ENCODE measurements at regions of chr2 and their contacts with region 1.

Region 1: DNA sequence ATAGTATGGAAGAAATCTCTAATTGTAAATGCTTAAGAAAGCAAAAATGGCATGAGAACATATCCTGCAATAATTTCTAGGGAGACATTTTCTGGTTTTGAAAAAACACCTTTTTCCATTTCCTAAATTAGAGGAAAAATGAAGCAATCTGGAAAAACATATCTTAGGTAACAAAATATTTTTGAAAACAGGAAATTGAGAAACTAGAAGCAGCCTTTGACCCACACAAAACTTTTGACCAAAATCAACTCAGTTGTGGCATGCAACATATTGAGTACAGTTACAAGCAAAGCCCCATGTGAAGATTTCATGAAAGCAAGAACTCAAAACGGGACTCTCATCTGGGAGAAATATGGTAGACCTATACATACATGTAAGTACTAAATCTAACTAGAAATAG is 28.6 kb upstream of the CHAC2 start:
- DNase-seq: no peak
- ATAC-seq: no peak
- H3K4me3 ChIP-seq: no peak overlapping the region
- H3K27ac ChIP-seq: no peak overlapping the region
- H3K4me1 ChIP-seq: peaks cover 0 to 17% (median 4%) of the 10 kb centered on the region in 9 donors
- H3K27me3 ChIP-seq: no peaks in the 10 kb centered on the region
- CTCF ChIP-seq: no peak

Region 2: GRCh38 chr2:51981783-51982182 is 1757.2 kb before region 1 on chr2:
- intact Hi-C with region 1: loop called in 1 of 10 experiments (anchors 5 kb)
- DNase-seq: no peak
- ATAC-seq: no peak
- H3K4me3 ChIP-seq: no peak overlapping the region
- H3K27ac ChIP-seq: no peak overlapping the region
- H3K4me1 ChIP-seq: no peaks in the 10 kb centered on the region
- H3K27me3 ChIP-seq: no peaks in the 10 kb centered on the region
- CTCF ChIP-seq: no peak

Region 3: DNA sequence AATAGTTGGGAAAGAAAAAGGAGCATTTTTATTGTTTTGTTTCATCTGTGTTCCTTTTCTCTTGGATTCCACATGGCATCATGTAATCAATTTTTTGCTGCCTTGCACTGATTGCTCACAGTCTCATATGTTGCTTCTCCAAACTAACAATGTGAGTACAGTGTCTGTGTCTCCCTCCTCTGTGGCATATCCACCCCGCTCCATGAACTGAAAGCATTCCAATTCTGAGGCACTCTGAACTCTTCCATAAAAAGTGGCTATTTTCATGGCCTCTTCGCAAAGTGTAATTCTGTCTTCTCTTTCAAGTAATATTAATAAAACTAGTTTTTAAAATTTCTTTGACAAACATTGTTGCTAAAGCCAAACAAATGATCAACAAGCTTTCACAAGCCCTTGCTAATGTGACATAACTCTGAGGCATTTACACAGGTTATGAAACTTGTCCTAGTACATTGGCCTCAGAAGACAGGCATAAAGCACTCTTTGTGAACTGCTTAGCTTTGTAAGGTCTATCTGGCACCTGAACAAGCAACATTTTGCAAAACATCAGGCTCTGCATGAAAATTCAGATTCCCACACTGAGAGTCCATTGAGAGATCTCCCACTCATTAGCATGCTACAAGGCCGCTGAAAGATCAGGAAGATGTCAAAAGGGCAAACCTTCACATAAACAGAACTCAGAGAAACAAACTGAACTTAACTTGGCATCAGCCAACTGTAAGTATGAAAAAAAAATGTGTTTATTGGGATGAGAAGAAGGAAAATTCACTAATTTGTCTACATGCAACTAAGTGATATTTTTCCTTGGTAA is 87.8 kb after region 1 on chr2:
- intact Hi-C with region 1: no loop called
- DNase-seq: no peak
- ATAC-seq: peak in 7 of 8 donors; percentile 25 to 69 (median 54)
- H3K4me3 ChIP-seq: no peak overlapping the region
- H3K27ac ChIP-seq: peak overlapping the region in 8 of 10 donors; percentile 16 to 76 (median 40)
- H3K4me1 ChIP-seq: peaks cover 0 to 25% (median 20%) of the 10 kb centered on the region in 9 donors
- H3K27me3 ChIP-seq: no peaks in the 10 kb centered on the region
- CTCF ChIP-seq: no peak